ENCODE measurements at regions of chr2 and their contacts with region 1.

Region 1: DNA sequence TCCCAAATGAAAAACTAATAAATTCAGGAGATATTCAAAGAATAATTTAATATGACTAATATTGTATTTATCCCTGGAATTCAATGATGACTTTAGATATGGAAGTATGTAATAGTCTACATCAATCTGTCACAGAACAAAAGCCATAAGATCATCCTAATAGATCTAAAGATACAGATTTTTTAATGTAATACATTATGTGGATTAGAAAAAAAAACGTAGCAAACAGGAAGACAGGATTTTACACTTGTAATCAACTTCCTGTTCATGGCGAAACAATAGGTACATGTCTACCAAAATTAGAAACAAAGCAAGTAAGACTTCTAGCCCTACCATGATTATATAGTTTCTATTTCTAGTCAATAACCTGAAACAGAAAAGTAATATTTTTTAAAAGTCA is 192.2 kb downstream of the TTC32 start:
- DNase-seq: no peak

Region 2: DNA sequence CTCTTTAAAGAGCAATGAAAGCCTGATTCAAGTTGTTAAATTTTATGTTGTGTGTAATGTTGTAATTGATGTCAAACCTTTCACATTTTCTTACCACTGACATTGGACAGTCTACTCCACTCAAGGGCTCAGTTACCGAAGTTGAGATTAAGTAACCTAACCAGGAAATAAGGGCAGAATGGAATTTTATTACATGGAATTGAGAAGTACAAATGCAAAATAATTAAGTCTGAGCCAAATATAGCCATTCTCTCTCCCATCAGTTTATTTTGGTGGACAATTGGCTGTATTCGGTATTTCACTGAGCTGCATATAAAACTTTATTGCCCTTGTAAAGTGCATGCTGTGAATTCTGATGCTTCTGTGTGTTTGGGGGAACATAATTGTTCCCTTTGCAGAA is 39.2 kb before region 1 on chr2:
- intact Hi-C with region 1: loop called (anchors 1 kb)
- DNase-seq: no peak